Activated naive CD4-positive, alpha-beta T cell treated with anti-CD3 and anti-CD28 coated beads for 36 hours (primary cell): ENCODE measurements at regions of chr2 and their contacts with region 1.

Region 1: GRCh38 chr2:173965329-173966025 is at the start of gene SP3:
- DNase-seq: peak; percentile 97
- H3K4me3 Mint-ChIP-seq: peak within 1 kb of the TSS; percentile 86
- H3K27ac Mint-ChIP-seq: peak within 1 kb of the TSS; percentile 99
- H3K4me1 Mint-ChIP-seq: peaks cover 21% of the 10 kb centered on the region
- H3K27me3 Mint-ChIP-seq: no peaks in the 10 kb centered on the region
- total RNA-seq, gene SP3: 89.8 to 99.7 TPM

Region 2: GRCh38 chr2:173249661-173250641 is 715.5 kb before region 1 on chr2:
- CTCF ChIA-PET with region 1: no interaction called
- intact Hi-C with region 1: no loop called
- DNase-seq: no peak
- H3K4me3 Mint-ChIP-seq: no peak overlapping the region
- H3K27ac Mint-ChIP-seq: no peak overlapping the region
- H3K4me1 Mint-ChIP-seq: no peaks in the 10 kb centered on the region
- H3K27me3 Mint-ChIP-seq: peaks cover 16% of the 10 kb centered on the region

Region 3: DNA sequence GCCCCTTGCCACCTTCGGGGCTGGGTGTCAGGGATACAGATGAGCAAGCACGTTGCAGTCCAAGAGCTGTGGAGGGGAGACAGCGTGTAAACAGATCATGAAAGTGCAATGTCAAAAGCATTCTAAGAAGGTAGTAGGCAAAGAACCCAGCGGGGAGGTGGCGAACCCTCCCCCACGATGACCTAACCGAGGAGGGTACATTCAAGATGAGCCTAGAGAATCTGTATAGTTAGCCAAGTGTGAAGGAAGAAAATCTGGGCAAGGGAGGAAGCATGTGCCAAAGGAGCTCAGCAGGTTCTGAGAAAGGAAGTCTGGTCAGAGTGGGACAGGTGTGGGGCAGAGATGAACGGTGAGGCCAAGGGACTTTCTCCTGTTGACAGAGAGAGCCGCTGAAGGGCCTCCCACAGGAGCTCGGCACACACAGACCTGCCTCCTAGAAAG is 107.2 kb before region 1 on chr2:
- CTCF ChIA-PET with region 1: no interaction called
- intact Hi-C with region 1: no loop called
- DNase-seq: no peak
- H3K4me3 Mint-ChIP-seq: no peak overlapping the region
- H3K27ac Mint-ChIP-seq: no peak overlapping the region
- H3K4me1 Mint-ChIP-seq: peaks cover 5% of the 10 kb centered on the region
- H3K27me3 Mint-ChIP-seq: peaks cover 13% of the 10 kb centered on the region

Region 4: GRCh38 chr2:173929441-173929840 is 36.0 kb before region 1 on chr2:
- CTCF ChIA-PET with region 1: no interaction called
- intact Hi-C with region 1: loop called (anchors 5 kb)
- DNase-seq: no peak
- H3K4me3 Mint-ChIP-seq: no peak overlapping the region
- H3K27ac Mint-ChIP-seq: no peak overlapping the region
- H3K4me1 Mint-ChIP-seq: peaks cover 59% of the 10 kb centered on the region
- H3K27me3 Mint-ChIP-seq: no peaks in the 10 kb centered on the region

Region 5: GRCh38 chr2:174023591-174024523 is 58.4 kb after region 1 on chr2:
- CTCF ChIA-PET with region 1: no interaction called
- intact Hi-C with region 1: loop called (anchors 1 kb)
- DNase-seq: peak; percentile 61
- H3K4me3 Mint-ChIP-seq: no peak overlapping the region
- H3K27ac Mint-ChIP-seq: peak overlapping the region; percentile 19
- H3K4me1 Mint-ChIP-seq: peaks cover 8% of the 10 kb centered on the region
- H3K27me3 Mint-ChIP-seq: no peaks in the 10 kb centered on the region

Region 6: DNA sequence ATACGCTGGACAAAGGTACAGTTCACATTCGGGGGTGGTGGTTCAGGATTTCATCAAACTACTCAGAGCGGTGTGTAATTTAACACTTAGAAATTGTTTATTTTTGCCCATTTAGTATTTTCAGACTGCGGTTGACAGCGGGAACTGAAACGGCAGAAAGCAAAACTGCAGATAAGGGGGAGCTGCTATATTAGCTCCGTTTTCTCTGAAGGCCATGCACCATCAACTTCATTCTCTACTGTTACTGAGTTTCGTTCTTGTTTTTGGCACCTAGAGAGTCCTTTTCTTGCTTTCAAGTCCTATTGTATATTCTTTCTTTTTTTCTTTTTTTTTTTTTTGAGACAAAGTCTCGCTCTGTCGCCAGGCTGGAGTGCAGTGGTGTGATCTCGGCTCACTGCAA is 121.2 kb after region 1 on chr2:
- CTCF ChIA-PET with region 1: no interaction called
- intact Hi-C with region 1: no loop called
- DNase-seq: no peak
- H3K4me3 Mint-ChIP-seq: no peak overlapping the region
- H3K27ac Mint-ChIP-seq: no peak overlapping the region
- H3K4me1 Mint-ChIP-seq: no peaks in the 10 kb centered on the region
- H3K27me3 Mint-ChIP-seq: no peaks in the 10 kb centered on the region

Region 7: DNA sequence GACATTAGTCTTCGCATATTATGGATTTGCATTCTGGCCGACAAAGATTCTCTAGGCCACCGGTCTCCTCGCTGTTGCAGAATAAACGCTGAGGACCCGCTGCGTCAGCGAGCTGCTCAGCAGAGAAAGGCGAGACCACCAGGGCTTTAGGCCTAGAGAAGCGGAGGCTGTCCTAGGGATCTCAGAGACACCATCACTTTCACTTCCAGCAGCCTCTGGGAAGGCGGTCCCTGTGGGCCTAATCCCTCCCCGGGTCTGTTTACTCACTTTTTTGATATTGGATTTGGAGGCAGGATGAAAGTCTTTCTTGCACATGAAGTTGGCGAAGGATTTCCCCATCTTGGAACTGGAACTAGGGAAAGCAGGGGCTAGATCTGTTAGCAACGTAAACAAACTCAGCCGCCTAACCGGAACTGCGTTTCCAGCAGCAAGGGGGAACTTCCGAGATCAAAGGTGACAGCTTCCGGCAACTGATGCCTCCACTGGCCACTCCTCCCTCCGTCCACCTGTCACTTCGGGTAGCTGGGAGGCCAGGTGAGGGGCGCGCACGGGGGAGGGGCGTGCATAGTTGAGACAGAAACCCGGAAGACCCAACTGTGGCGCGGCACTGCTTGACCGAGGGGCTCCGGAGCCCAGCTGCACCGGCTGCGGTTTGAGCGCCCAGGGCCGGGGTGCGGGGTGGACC is 429.9 kb after region 1 on chr2 and contains the start of gene SCRN3:
- CTCF ChIA-PET with region 1: no interaction called
- intact Hi-C with region 1: loop called (anchors 2 kb)
- DNase-seq: peak; percentile 88
- H3K4me3 Mint-ChIP-seq: peak within 1 kb of the TSS; percentile 99
- H3K27ac Mint-ChIP-seq: peak within 1 kb of the TSS; percentile 99
- H3K4me1 Mint-ChIP-seq: peaks cover 38% of the 10 kb centered on the region
- H3K27me3 Mint-ChIP-seq: no peaks in the 10 kb centered on the region
- total RNA-seq, gene SCRN3: 10.7 to 12.3 TPM

Region 8: GRCh38 chr2:175167792-175168563 is 1202.5 kb after region 1 on chr2 and contains the start of gene ATF2:
- CTCF ChIA-PET with region 1: no interaction called
- intact Hi-C with region 1: loop called (anchors 1 kb)
- DNase-seq: peak; percentile 99
- H3K4me3 Mint-ChIP-seq: peak within 1 kb of the TSS; percentile 99
- H3K27ac Mint-ChIP-seq: peak within 1 kb of the TSS; percentile 97
- H3K4me1 Mint-ChIP-seq: peaks cover 43% of the 10 kb centered on the region
- H3K27me3 Mint-ChIP-seq: no peaks in the 10 kb centered on the region
- total RNA-seq, gene ATF2: 48.0 to 53.3 TPM